Caki2 (cell line): ENCODE measurements at regions of chr12 and their contacts with region 1.

Region 1: DNA sequence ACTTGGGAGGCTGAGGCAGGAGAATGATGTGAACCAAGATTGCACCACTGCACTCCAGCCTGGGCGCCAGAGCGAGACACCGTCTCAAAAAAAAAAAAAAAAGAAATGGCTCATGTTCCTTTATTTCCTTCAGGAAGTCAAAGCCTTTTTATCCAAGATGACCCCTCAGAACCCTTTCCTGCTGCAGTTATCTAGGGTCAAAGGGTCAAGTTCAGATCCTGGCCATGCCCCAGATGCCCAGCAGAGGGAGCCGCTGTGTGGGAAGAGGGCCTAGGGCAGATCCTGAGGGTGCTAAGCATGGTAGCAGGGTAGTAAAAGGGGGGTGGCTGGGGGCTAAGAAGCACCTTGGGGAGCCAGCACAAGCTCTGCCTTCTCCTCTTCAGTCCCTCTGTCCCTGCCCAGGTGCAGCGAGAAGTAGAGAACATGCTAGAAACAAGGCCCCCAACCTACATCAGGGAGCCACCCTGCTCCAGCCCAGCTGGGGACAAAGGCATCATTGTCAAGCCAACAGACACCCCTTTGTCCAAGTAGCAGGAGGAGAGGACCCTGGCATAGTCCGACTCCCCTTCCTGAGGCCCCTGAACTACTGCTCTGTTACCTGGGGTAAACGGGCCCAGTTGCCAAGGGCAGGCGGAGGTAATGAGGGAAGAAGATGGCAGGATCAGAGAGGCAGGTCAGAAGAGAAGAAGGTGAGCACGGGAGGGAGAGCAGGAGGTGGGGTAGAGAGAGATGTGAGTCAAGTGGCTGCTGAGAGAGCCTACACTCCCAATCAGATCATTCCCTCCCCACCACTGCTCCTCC is 6.5 kb downstream of the NFE2 start:
- DNase-seq: no peak

Region 2: GRCh38 chr12:54360717-54361456 is 66.5 kb after region 1 on chr12:
- in situ Hi-C with region 1: loop called (anchors 5 kb)
- DNase-seq: peak; percentile 84

Region 3: DNA sequence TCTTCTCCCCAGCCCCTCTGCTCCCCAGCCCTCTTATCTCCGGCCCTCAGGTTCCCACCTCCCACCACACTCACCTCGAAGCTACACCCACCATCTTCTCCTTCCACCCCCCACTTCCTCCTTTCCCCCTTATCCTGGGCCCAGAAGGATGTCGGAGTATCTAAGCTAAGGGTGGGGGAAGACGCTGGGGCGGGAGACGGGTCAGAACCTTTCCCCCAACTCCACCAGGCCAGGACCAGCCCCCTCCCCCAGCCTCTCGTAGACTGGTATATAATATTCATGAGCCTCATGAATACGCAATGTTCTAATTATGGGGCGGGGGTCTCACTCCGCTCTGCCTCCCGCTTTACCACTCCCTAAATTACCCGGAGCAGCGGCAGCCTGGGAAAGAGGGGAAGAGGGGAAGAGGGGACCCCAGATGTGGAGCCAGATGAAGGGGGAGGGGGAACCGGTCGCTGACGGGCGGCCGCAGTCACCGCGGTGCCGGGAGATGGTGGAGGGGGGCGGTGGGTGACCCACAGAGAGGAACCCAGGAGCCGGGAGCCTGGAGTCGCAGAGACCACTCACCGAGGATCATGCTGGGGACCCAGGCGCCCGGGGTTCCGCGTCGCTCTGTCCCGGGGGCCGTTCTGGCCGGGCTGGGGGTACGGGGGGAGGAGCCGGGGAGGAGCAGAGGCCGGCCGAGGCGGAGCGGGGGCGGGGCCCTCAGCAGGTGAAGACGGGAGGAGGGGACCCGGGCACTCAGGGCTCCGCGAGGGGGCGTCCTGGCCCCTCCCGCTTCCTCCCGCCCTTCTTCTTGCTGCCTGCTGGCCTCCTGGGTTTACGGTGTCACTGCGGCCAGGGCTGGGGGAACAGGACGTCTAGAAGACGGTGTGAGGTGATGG is 96.6 kb after region 1 on chr12:
- in situ Hi-C with region 1: no loop called
- DNase-seq: peak; percentile 28